IMR-90 (cell line): ENCODE measurements at regions of chr6 and their contacts with region 1.

Region 1: DNA sequence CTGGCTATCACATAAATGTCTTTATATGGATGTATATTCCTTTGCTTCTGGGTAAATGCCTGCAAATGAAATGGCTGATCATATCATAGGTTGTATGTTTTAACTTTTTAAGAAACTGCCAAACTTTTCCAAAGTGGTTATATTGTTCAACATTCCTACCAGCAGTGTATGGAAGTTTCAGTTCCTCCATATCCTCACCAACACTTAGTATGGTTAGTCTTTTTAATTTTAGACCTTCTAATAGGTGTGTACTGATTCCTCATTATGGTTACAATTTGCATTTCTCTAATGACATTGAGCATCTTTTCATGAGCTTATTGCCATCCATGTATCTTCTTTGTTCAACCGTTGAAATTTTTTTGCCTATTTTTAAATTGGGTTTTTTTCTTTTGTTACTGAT is 155.4 kb downstream of the ZFAND3 start:
- DNase-seq: no peak
- ATAC-seq: no peak
- H3K4me3 ChIP-seq: no peak overlapping the region
- H3K27ac ChIP-seq: no peak overlapping the region
- H3K4me1 ChIP-seq: peaks cover 5% of the 10 kb centered on the region
- H3K27me3 ChIP-seq: no peaks in the 10 kb centered on the region
- CTCF ChIP-seq: no peak
- POLR2A ChIP-seq: no peak
- RAD21 ChIP-seq: no peak

Region 2: DNA sequence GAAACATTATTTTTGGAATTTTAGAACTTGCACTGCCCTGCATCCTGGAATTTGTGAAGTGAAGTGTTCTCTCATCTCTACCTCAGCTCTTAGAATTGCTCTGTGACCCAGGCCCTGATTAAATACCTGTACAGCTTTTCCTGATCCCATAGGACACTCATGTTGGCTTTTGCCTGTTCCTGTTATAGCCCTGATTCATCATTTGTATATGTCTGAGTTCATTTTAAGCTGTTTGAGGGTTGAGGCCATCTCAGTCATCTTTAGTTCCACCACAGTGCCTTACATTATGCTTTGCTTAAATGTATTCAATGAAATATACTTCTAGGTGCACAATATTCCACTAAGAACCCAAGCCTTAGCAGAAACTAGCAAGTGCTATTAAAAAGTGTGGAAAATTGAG is 129.0 kb before region 1 on chr6:
- CTCF ChIA-PET with region 1: interaction called, 13 read pairs
- POLR2A ChIA-PET with region 1: no interaction called
- dilution Hi-C with region 1: no loop called
- in situ Hi-C with region 1: no loop called
- intact Hi-C with region 1: no loop called
- DNase-seq: peak; percentile 38
- ATAC-seq: peak; percentile 66
- H3K4me3 ChIP-seq: no peak overlapping the region
- H3K27ac ChIP-seq: no peak overlapping the region
- H3K4me1 ChIP-seq: peaks cover 9% of the 10 kb centered on the region; the same call in 1 of the 2 replicates
- H3K27me3 ChIP-seq: no peaks in the 10 kb centered on the region
- CTCF ChIP-seq: no peak
- POLR2A ChIP-seq: no peak
- RAD21 ChIP-seq: no peak